H1 (cell line): ENCODE measurements at regions of chr1 and their contacts with region 1.

Region 1: GRCh38 chr1:57966751-57967406 is 543.0 kb upstream of the DAB1 start:
- DNase-seq: peak in 1 of 2 experiments; percentile 71
- H3K4me3 ChIP-seq: no peak overlapping the region
- H3K27ac ChIP-seq: no peak overlapping the region
- H3K4me1 ChIP-seq: peaks cover 0 to 13% (median 5%) of the 10 kb centered on the region in 4 experiments; a peak in 3 of 7 replicates
- H3K27me3 ChIP-seq: no peaks in the 10 kb centered on the region
- CTCF ChIP-seq: no peak
- EP300 ChIP-seq: no peak
- POLR2A ChIP-seq: no peak
- RAD21 ChIP-seq: peak in 1 of 2 experiments; percentile 38; a peak in 1 of 4 replicates

Region 2: GRCh38 chr1:58035523-58035922 is 68.6 kb after region 1 on chr1:
- CTCF ChIA-PET with region 1: interaction called, 16 read pairs
- POLR2A ChIA-PET with region 1: no interaction called
- DNase-seq: no peak
- H3K4me3 ChIP-seq: no peak overlapping the region
- H3K27ac ChIP-seq: no peak overlapping the region
- H3K4me1 ChIP-seq: peaks cover 5 to 46% (median 22%) of the 10 kb centered on the region in 4 experiments
- H3K27me3 ChIP-seq: no peaks in the 10 kb centered on the region
- CTCF ChIP-seq: peak in 2 of 3 experiments; percentile 48 to 51; a peak in 3 of 4 replicates
- EP300 ChIP-seq: no peak
- POLR2A ChIP-seq: no peak
- RAD21 ChIP-seq: peak; percentile 65 to 82

Region 3: GRCh38 chr1:58047265-58047858 is 80.5 kb after region 1 on chr1:
- CTCF ChIA-PET with region 1: interaction called, 13 read pairs
- POLR2A ChIA-PET with region 1: no interaction called
- DNase-seq: peak in 1 of 2 experiments; percentile 64
- H3K4me3 ChIP-seq: no peak overlapping the region
- H3K27ac ChIP-seq: no peak overlapping the region
- H3K4me1 ChIP-seq: no peaks in the 10 kb centered on the region; a peak in 1 of 7 replicates
- H3K27me3 ChIP-seq: no peaks in the 10 kb centered on the region
- CTCF ChIP-seq: peak; percentile 71 to 97 (median 85)
- EP300 ChIP-seq: no peak
- POLR2A ChIP-seq: no peak
- RAD21 ChIP-seq: peak; percentile 82 to 84